Natural killer cell (primary cell): ENCODE measurements at regions of chr11 and their contacts with region 1.

Region 1: DNA sequence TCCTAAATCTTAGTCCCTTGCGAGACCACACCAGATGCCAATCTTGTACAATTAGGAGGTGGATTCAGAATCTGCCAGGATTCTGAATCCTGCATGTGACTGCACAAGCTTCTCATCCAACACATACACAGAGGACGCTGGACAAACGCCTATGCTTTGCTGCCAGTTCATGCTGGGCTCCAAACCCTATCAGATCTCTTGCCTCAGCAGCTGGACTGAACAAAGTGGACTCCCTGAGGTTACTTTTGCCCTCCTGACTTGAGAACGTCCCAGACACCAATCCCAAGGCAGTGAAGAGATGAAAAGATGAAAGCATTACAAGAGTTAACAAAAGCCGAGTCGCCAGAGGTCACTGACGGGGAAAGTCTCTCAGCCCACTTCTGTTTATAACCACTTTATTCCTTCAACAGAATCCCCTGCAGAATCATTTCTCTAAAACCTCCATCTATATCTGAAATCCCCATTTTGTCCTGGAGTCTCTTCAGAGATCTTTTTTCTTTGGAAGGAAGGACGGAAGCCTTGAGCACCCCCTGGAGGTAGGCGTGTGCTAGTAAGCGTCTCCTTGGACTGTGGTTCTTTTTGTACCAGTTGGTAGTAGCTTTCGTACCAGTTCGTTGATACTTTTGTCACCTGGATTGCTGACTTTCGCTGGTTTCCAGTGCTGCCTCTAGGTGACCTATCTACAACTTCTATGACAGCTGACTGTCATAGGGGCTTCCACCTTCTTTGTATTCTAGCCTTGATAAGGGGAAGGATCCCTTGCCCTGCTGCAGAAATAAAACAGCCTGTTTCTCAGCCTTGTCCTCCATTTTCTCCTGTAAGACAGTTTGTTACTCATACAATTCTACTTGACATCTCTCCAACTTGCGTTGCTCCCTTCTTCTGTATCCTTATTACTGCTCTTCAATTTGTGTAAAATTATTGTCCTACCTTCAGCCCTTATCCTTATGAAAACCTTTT is 26.1 kb upstream of the EED start:
- DNase-seq: peak; percentile 47 to 83
- ATAC-seq: peak; percentile 89 to 96 (median 93)
- H3K4me3 ChIP-seq: no peak overlapping the region
- H3K4me3 Mint-ChIP-seq: peak overlapping the region; percentile 64
- H3K27ac ChIP-seq: peak overlapping the region; percentile 13
- H3K27ac Mint-ChIP-seq: no peak overlapping the region
- H3K4me1 ChIP-seq: peaks cover 11% of the 10 kb centered on the region
- H3K4me1 Mint-ChIP-seq: peaks cover 8% of the 10 kb centered on the region in 2 donors
- H3K27me3 ChIP-seq: no peaks in the 10 kb centered on the region
- H3K27me3 Mint-ChIP-seq: peaks cover 15 to 20% of the 10 kb centered on the region in 2 donors
- CTCF ChIP-seq: peak; percentile 95

Region 2: GRCh38 chr11:85941380-85941973 is 276.9 kb before region 1 on chr11:
- intact Hi-C with region 1: loop called (anchors 1 kb)
- DNase-seq: peak in 1 of 2 donors; percentile 30
- ATAC-seq: peak in 2 of 3 donors; percentile 48 to 63
- H3K4me3 ChIP-seq: no peak overlapping the region
- H3K4me3 Mint-ChIP-seq: no peak overlapping the region
- H3K27ac ChIP-seq: no peak overlapping the region
- H3K27ac Mint-ChIP-seq: no peak overlapping the region
- H3K4me1 ChIP-seq: peaks cover 3% of the 10 kb centered on the region
- H3K4me1 Mint-ChIP-seq: peaks cover 12 to 14% of the 10 kb centered on the region in 2 donors
- H3K27me3 ChIP-seq: no peaks in the 10 kb centered on the region
- H3K27me3 Mint-ChIP-seq: no peaks in the 10 kb centered on the region
- CTCF ChIP-seq: peak; percentile 21

Region 3: DNA sequence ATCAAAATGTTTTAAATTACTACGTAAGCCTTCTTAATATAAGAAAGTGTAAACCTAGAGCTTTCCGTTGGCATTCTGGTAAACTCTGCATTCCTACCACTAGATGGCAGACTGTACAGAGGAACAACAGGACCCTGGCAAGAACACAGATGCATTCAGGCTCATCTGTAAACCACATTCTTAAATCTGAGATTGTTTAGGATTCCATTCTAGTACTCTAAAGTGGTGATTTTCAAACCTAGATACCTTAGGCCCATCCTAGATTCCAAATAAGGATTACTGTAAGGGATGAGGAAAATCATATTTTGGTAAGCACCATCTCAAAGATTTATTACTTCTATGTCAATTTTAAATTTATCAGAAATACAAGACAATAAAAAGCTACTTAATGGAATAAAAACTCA is 176.4 kb before region 1 on chr11:
- intact Hi-C with region 1: loop called (anchors 1 kb)
- DNase-seq: peak in 1 of 2 donors; percentile 88
- ATAC-seq: peak; percentile 92 to 95 (median 95)
- H3K4me3 ChIP-seq: no peak overlapping the region
- H3K4me3 Mint-ChIP-seq: peak overlapping the region; percentile 40
- H3K27ac ChIP-seq: no peak overlapping the region
- H3K27ac Mint-ChIP-seq: peak overlapping the region; percentile 76 to 83
- H3K4me1 ChIP-seq: peaks cover 22% of the 10 kb centered on the region
- H3K4me1 Mint-ChIP-seq: peaks cover 64 to 70% of the 10 kb centered on the region in 2 donors
- H3K27me3 ChIP-seq: no peaks in the 10 kb centered on the region
- H3K27me3 Mint-ChIP-seq: no peaks in the 10 kb centered on the region
- CTCF ChIP-seq: peak; percentile 94